AG04449 (cell line): ENCODE measurements at regions of chr2 and their contacts with region 1.

Region 1: GRCh38 chr2:25966538-25967265 is 15.6 kb downstream of the KIF3C start:
- DNase-seq: no peak
- H3K4me3 ChIP-seq: no peak overlapping the region
- CTCF ChIP-seq: no peak

Region 2: DNA sequence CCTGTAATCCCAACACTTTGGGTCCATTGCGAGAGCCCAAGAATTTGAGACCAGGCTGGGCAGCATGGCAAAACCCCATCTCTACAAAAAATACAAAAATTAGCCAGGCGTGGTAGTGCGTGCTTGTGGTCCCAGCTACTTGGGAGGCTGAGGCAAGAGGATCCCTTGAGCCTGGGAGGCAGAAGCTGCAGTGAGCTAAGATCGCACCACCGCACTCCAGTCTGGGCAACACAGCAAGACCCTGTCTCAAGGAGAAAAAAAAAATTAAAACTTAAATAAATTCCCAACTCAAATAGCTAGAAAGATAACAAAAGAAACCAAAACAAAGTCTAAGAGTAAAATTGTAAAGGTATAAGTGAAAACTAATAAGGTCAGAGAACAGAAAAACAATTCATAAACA is 94.6 kb before region 1 on chr2:
- CTCF ChIA-PET with region 1: no interaction called
- POLR2A ChIA-PET with region 1: no interaction called
- DNase-seq: no peak
- H3K4me3 ChIP-seq: no peak overlapping the region
- CTCF ChIP-seq: no peak

Region 3: GRCh38 chr2:25976983-25977741 is 10.5 kb after region 1 on chr2:
- CTCF ChIA-PET with region 1: interaction called, 10 read pairs
- POLR2A ChIA-PET with region 1: no interaction called
- DNase-seq: no peak
- H3K4me3 ChIP-seq: no peak overlapping the region
- CTCF ChIP-seq: no peak